SK-N-SH (cell line): ENCODE measurements at regions of chr11 and their contacts with region 1.

Region 1: DNA sequence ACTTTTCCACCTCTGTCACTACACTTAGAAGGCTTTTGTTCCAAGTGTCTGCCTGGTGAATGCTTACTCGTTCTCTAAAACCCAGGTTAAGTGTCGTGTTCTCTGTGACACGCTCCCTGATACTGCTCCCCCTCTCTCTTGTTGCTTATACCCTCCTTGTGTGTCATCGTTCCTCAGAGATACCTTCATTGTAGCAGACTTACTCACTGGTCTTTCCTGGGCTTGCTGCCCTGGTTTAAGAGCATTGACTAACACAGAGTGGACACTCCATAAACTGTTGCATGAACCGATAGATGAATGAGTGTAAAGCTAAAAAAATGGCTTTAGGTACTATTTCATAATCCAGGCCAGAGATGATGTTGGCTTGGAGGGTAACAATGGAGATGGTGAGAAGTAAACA is 171.3 kb downstream of the GRIK4 start:
- DNase-seq: no peak
- H3K4me3 ChIP-seq: no peak overlapping the region
- H3K27ac ChIP-seq: no peak overlapping the region
- H3K4me1 ChIP-seq: peaks cover 0 to 3% of the 10 kb centered on the region in 2 experiments; a peak in 1 of 4 replicates
- H3K27me3 ChIP-seq: peaks cover 8% of the 10 kb centered on the region; the same call in 1 of the 2 replicates
- CTCF ChIP-seq: no peak
- EP300 ChIP-seq: no peak
- RAD21 ChIP-seq: no peak

Region 2: GRCh38 chr11:120517390-120517761 is 165.5 kb before region 1 on chr11:
- CTCF ChIA-PET with region 1: interaction called, 168 read pairs
- POLR2A ChIA-PET with region 1: no interaction called
- DNase-seq: no peak
- H3K4me3 ChIP-seq: no peak overlapping the region
- H3K27ac ChIP-seq: no peak overlapping the region
- H3K4me1 ChIP-seq: peaks cover 0 to 34% of the 10 kb centered on the region in 2 experiments; a peak in 1 of 4 replicates
- H3K27me3 ChIP-seq: peaks cover 15% of the 10 kb centered on the region; the same call in 1 of the 2 replicates
- CTCF ChIP-seq: no peak
- EP300 ChIP-seq: no peak
- RAD21 ChIP-seq: no peak

Region 3: DNA sequence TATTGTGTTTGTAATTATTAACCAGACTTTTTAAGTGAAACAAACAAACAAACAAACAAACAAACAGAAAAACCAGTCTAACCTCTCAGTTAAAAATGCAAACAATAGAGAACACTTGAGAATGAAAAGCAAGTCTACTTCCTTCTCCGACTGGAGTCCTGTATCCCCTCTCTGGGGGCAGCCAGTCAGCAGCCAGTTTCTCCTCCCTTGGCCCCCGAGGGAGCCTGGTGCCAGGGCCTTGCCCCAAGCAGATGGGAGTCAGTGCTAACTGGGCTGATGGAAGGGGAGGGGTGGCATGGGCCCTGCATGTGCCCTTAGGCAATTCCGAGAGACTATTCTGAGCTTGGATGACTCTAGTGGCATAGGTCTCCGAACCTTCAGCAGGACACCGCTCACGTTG is 34.1 kb before region 1 on chr11:
- CTCF ChIA-PET with region 1: interaction called, 15 read pairs
- POLR2A ChIA-PET with region 1: no interaction called
- DNase-seq: no peak
- H3K4me3 ChIP-seq: no peak overlapping the region
- H3K27ac ChIP-seq: no peak overlapping the region
- H3K4me1 ChIP-seq: peaks cover 0 to 8% of the 10 kb centered on the region in 2 experiments; a peak in 1 of 4 replicates
- H3K27me3 ChIP-seq: no peaks in the 10 kb centered on the region
- CTCF ChIP-seq: no peak
- EP300 ChIP-seq: no peak
- RAD21 ChIP-seq: no peak

Region 4: GRCh38 chr11:120696597-120697218 is 13.8 kb after region 1 on chr11:
- CTCF ChIA-PET with region 1: interaction called, 66 read pairs
- POLR2A ChIA-PET with region 1: no interaction called
- DNase-seq: no peak
- H3K4me3 ChIP-seq: no peak overlapping the region
- H3K27ac ChIP-seq: no peak overlapping the region
- H3K4me1 ChIP-seq: no peaks in the 10 kb centered on the region; a peak in 1 of 4 replicates
- H3K27me3 ChIP-seq: no peaks in the 10 kb centered on the region
- CTCF ChIP-seq: peak; percentile 33; the same call in 1 of the 2 replicates
- EP300 ChIP-seq: no peak
- RAD21 ChIP-seq: no peak

Region 5: DNA sequence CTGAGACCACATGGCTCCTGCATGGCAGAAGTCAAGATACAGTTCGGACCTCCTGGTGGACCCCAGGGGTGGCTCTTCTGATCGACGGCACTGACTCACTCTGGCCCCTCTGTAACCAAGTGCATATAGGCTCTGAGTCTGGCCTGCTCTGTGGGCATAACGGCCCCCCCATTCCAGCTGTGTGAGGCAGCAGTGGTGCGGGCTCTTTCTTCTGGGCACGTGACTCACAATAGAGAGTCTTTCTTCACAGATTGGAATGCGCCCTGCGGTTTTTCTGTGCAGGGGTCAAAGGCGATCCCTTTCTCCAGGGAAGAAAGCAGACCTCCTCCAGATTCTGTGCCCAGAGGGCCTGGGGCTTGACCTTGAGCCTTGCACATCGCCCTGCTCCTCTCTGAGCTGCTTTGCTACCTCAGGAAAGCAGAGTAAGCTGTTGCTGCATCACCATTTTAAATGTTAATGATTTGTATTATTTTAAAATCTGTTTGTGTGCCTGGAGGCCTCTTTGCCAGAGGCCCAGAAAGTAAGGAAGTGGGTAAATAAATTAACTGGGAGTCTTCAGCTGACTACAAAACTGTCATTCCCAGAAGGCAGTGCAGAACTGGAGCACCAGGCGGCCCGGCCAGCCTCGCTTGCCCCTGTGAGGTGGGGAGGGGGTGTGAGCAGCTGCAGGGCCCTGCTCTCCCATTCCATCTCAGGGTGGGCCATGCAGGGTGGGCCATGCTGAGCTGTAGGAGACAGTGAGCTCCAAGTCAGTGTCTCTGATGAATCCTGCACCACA is 27.7 kb after region 1 on chr11:
- CTCF ChIA-PET with region 1: interaction called, 38 read pairs
- POLR2A ChIA-PET with region 1: no interaction called
- DNase-seq: peak; percentile 41
- H3K4me3 ChIP-seq: no peak overlapping the region
- H3K27ac ChIP-seq: no peak overlapping the region
- H3K4me1 ChIP-seq: peaks cover 0 to 17% of the 10 kb centered on the region in 2 experiments; a peak in 1 of 4 replicates
- H3K27me3 ChIP-seq: no peaks in the 10 kb centered on the region; the same call in 1 of the 2 replicates
- CTCF ChIP-seq: no peak
- EP300 ChIP-seq: no peak
- RAD21 ChIP-seq: no peak